Left ventricle myocardium superior (tissue), 1 donor: ENCODE measurements at regions of chr1 and their contacts with region 1.

Region 1: GRCh38 chr1:101247404-101248287 is 10.8 kb downstream of the S1PR1 start:
- DNase-seq: no peak
- ATAC-seq: no peak

Region 2: DNA sequence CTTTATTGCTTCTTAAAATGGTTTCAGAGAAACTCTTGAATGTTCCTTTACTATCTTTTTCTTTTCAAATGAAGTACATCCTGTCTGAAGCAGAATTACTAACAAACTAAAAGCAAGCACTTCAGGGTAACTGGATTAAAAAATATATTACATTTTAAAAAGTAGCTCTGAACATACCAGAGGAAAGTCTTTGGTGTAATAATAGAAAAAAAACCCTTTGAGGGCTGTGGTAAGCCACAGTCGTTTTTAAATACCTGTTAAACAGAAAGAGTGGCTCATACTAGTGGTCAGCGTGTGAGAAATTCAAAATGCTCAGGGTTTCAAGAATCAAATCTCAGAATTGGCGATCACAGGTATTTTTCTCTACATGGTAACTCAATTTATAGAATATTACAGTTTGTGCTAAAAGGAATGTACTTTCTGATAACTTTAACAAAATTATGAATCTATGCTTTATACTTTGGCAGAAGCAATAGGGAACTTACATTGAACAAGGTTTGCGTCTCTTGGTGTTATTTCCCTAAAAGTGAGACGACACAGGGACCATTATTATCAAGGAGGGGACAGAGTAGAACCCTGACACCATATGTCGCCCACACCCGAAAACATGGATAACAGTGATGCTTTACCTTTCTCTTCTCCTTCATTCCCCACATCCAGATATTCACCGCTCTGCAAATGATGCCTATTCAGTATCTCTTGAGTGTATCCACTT is 125.0 kb before region 1 on chr1:
- intact Hi-C with region 1: no loop called
- DNase-seq: no peak
- ATAC-seq: no peak

Region 3: DNA sequence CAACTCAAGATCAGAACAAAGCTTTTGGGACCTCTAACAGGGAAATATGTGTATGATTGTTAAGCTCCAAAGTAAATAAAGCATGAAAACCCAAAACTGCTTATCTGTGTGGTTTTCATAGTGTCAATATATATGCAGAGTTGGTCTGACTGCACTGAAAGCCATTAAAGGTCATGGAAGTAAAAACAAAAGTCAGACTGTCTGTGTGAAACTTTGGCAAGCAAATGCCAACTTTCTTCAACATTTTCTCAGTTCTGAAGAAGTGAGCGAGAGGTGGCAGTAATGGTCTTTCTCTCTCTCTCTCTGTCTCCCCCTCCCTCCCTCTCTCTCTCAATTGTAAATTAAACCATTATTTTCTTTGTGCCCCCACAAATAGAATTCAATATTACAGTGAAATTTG is 110.9 kb before region 1 on chr1:
- intact Hi-C with region 1: loop called (anchors 10 kb)
- DNase-seq: no peak
- ATAC-seq: peak; percentile 58